Activated naive CD4-positive, alpha-beta T cell treated with anti-CD3 and anti-CD28 coated beads for 36 hours (primary cell): ENCODE measurements at regions of chr9 and their contacts with region 1.

Region 1: GRCh38 chr9:132669698-132670456 is at the start of gene DDX31:
- DNase-seq: peak; percentile 85
- H3K4me3 Mint-ChIP-seq: peak within 1 kb of the TSS; percentile 89
- H3K27ac Mint-ChIP-seq: peak within 1 kb of the TSS; percentile 88
- H3K4me1 Mint-ChIP-seq: peaks cover 47% of the 10 kb centered on the region
- H3K27me3 Mint-ChIP-seq: no peaks in the 10 kb centered on the region
- total RNA-seq, gene DDX31: 13.7 to 15.0 TPM

Region 2: DNA sequence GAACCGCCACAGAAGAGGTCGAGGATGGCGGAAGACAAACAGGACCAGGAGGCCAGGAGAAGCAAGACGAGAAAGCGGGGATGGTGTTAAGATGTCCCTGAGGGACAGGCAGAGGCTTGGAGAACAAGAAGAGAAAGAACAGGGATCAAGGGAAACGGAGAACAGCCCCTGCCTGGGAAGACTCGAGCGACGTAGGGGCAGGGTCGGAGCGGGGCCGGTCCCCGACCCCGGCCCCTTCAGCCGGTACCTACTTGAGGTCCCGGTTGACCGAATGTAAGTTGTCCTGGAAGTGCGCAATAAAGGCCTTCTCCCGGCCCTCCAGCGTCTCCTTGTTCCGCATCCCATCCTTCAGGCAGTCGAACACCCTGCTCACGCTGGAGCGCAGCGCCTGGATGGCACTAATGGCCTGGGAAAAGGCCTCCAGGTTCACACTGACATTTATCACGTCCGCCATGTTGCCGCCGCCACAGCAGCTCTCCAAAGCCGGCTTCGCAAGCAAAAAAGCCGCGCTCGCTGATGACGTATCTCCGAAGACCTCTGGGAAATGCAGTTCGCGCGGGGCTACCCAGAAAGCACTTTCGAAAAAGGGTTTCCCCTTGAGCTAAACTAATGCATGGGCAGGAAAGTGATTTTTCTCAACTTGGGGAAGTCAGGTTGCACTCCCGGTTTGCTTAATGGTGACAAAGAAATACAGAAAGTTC is 590.3 kb before region 1 on chr9 and contains the start of gene MED27:
- CTCF ChIA-PET with region 1: no interaction called
- intact Hi-C with region 1: loop called (anchors 5 kb)
- DNase-seq: peak; percentile 99
- H3K4me3 Mint-ChIP-seq: peak within 1 kb of the TSS; percentile 86
- H3K27ac Mint-ChIP-seq: peak within 1 kb of the TSS; percentile 74
- H3K4me1 Mint-ChIP-seq: peaks cover 45% of the 10 kb centered on the region
- H3K27me3 Mint-ChIP-seq: no peaks in the 10 kb centered on the region
- total RNA-seq, gene MED27: 27.7 to 31.3 TPM

Region 3: GRCh38 chr9:132406554-132407122 is 263.2 kb before region 1 on chr9 and contains the start of gene TTF1:
- CTCF ChIA-PET with region 1: interaction called, 4 read pairs
- intact Hi-C with region 1: loop called (anchors 5 kb)
- DNase-seq: peak; percentile 96
- H3K4me3 Mint-ChIP-seq: peak within 1 kb of the TSS; percentile 95
- H3K27ac Mint-ChIP-seq: peak within 1 kb of the TSS; percentile 90
- H3K4me1 Mint-ChIP-seq: peaks cover 53% of the 10 kb centered on the region
- H3K27me3 Mint-ChIP-seq: peaks cover 10% of the 10 kb centered on the region
- total RNA-seq, gene TTF1: 27.1 to 29.9 TPM

Region 4: GRCh38 chr9:132597073-132597775 is 72.7 kb before region 1 on chr9:
- CTCF ChIA-PET with region 1: no interaction called
- intact Hi-C with region 1: no loop called
- DNase-seq: no peak
- H3K4me3 Mint-ChIP-seq: no peak overlapping the region
- H3K27ac Mint-ChIP-seq: no peak overlapping the region
- H3K4me1 Mint-ChIP-seq: no peaks in the 10 kb centered on the region
- H3K27me3 Mint-ChIP-seq: no peaks in the 10 kb centered on the region

Region 5: GRCh38 chr9:132708769-132709168 is 38.9 kb after region 1 on chr9:
- CTCF ChIA-PET with region 1: no interaction called
- intact Hi-C with region 1: no loop called
- DNase-seq: no peak
- H3K4me3 Mint-ChIP-seq: no peak overlapping the region
- H3K27ac Mint-ChIP-seq: no peak overlapping the region
- H3K4me1 Mint-ChIP-seq: no peaks in the 10 kb centered on the region
- H3K27me3 Mint-ChIP-seq: peaks cover 6% of the 10 kb centered on the region

Region 6: DNA sequence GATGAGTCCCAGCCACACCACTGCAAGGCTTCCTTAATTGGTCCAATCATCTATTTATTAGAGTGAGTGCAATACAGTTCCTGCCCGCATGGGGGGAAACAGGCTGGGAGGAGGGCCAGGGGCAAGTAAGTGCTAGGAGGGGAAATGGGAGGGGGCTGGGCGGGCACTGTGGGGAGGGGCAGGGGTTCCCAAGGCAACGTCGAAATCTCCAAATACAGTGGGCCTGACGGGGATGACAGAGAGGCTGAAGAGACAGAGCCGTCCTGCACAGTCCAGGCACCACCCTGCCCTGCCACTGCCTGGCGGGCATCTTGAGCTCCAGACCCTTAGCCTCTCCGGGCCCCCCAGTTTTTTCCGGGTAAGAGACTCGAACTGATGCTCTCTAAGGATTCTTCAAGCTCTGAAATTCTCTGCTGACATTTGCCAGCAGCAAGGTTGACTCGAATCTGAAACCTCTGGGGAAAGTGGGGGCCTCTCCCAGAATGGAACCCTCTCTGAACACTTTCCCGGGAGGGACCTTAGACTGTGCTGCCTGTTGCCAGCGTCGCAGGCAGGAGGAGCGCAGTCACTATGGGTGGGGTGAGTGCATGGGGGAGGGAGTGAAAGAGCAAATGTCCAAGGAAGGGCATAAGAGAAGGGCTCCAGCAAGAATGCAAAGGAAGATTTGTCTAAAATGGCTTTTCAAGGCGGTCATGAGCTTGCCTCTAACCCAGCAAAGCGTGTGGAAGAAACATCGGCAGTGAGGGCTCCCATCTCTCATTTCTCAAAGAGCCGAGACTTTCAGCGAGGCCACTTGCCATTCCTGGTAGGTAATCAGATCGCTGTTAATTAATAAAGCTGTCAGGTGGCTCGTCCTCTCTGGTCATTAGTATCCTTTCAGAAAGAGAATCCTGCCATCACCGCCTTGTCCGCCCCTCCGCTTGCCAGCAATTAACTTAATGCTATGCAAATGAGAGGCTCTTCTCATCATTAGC is 99.3 kb after region 1 on chr9:
- CTCF ChIA-PET with region 1: interaction called, 3 read pairs
- intact Hi-C with region 1: loop called (anchors 2 kb)
- DNase-seq: peak; percentile 80
- H3K4me3 Mint-ChIP-seq: peak overlapping the region; percentile 88
- H3K27ac Mint-ChIP-seq: peak overlapping the region; percentile 89
- H3K4me1 Mint-ChIP-seq: peaks cover 13% of the 10 kb centered on the region
- H3K27me3 Mint-ChIP-seq: no peaks in the 10 kb centered on the region

Region 7: GRCh38 chr9:132877824-132878694 is 208.2 kb after region 1 on chr9 and contains the start of gene AK8:
- CTCF ChIA-PET with region 1: no interaction called
- intact Hi-C with region 1: loop called (anchors 1 kb)
- DNase-seq: peak; percentile 71
- H3K4me3 Mint-ChIP-seq: peak within 1 kb of the TSS; percentile 74
- H3K27ac Mint-ChIP-seq: no peak within 1 kb of the TSS
- H3K4me1 Mint-ChIP-seq: peaks cover 8% of the 10 kb centered on the region
- H3K27me3 Mint-ChIP-seq: no peaks in the 10 kb centered on the region
- total RNA-seq, gene AK8: not detected

Region 8: GRCh38 chr9:133539991-133540697 is 870.3 kb after region 1 on chr9:
- CTCF ChIA-PET with region 1: no interaction called
- intact Hi-C with region 1: no loop called
- DNase-seq: no peak
- H3K4me3 Mint-ChIP-seq: no peak overlapping the region
- H3K27ac Mint-ChIP-seq: no peak overlapping the region
- H3K4me1 Mint-ChIP-seq: no peaks in the 10 kb centered on the region
- H3K27me3 Mint-ChIP-seq: no peaks in the 10 kb centered on the region